ENCODE measurements at regions of chr1 and their contacts with region 1.

Region 1: GRCh38 chr1:26761217-26761616 is 26.5 kb upstream of the PIGV start:
- DNase-seq: peak in 1 of 35 experiments; percentile 17
- ATAC-seq: no peak
- H3K4me3 ChIP-seq: no peak overlapping the region
- H3K4me3 Mint-ChIP-seq: no peak overlapping the region
- H3K27ac ChIP-seq: no peak overlapping the region
- H3K27ac Mint-ChIP-seq: peak overlapping the region in 1 of 2 donors; percentile 54
- H3K4me1 ChIP-seq: peaks cover 0 to 9% of the 10 kb centered on the region in 2 experiments
- H3K4me1 Mint-ChIP-seq: peaks cover 23 to 31% (median 30%) of the 10 kb centered on the region in 3 donors
- H3K27me3 ChIP-seq: no peaks in the 10 kb centered on the region
- H3K27me3 Mint-ChIP-seq: no peaks in the 10 kb centered on the region

Region 2: DNA sequence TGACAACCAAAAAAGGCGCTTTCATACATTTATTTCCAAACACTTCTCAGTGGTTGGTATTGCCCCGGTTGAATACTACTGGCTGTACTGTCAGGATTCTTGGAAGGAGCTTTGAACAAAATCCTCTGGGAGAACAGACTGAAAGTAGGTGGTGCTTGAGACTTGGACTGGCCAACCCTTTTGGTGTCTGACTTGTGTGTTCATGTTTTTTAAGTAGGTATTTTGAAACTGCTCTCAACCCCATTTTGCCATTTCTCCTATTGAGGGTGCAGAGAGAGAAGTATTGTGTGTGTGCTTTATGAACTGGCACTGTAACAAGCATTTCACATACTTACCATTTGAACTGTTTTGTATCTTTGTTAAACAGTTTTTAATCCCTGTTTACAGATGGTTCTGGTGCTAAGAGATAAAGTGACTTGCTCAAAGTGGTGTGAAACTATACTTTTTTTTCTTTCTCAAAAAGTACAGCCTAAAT is 44.2 kb before region 1 on chr1:
- CTCF ChIA-PET with region 1: no interaction called
- POLR2A ChIA-PET with region 1: interaction called in 1 of 2 experiments, 11 read pairs
- DNase-seq: no peak
- ATAC-seq: no peak
- H3K4me3 ChIP-seq: no peak overlapping the region
- H3K4me3 Mint-ChIP-seq: peak overlapping the region in 1 of 3 donors; percentile 34
- H3K27ac ChIP-seq: no peak overlapping the region
- H3K27ac Mint-ChIP-seq: peak overlapping the region; percentile 64 to 89
- H3K4me1 ChIP-seq: peaks cover 39 to 57% of the 10 kb centered on the region in 2 experiments
- H3K4me1 Mint-ChIP-seq: peaks cover 90 to 94% (median 92%) of the 10 kb centered on the region in 3 donors
- H3K27me3 ChIP-seq: no peaks in the 10 kb centered on the region
- H3K27me3 Mint-ChIP-seq: no peaks in the 10 kb centered on the region

Region 3: DNA sequence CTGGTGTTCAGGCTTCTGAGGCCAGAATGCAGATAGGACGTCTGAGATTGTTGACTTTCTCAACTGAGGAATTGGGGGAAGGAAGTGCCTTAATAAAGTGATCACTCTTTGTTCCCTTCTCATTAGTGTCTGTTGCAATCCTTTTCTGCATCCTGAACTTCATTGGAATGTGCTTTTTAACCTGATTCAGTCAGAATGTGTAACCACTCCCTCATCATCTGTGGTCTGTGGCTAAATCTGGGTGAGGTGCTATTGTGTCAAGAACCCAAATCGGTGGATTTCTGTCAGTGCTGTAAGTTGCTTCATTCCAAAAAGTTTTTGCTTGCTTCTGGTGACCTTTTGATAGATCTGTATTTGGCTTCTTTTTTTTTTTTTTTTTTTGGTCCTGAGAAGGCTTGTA is 27.2 kb before region 1 on chr1:
- CTCF ChIA-PET with region 1: no interaction called
- POLR2A ChIA-PET with region 1: no interaction called
- DNase-seq: peak in 1 of 35 experiments; percentile 49
- ATAC-seq: peak; percentile 53 to 69 (median 62)
- H3K4me3 ChIP-seq: no peak overlapping the region
- H3K4me3 Mint-ChIP-seq: peak overlapping the region in 1 of 3 donors; percentile 42
- H3K27ac ChIP-seq: peak overlapping the region; percentile 3
- H3K27ac Mint-ChIP-seq: peak overlapping the region; percentile 86 to 91
- H3K4me1 ChIP-seq: peaks cover 25 to 41% of the 10 kb centered on the region in 2 experiments
- H3K4me1 Mint-ChIP-seq: peaks cover 57 to 67% (median 66%) of the 10 kb centered on the region in 3 donors
- H3K27me3 ChIP-seq: no peaks in the 10 kb centered on the region
- H3K27me3 Mint-ChIP-seq: no peaks in the 10 kb centered on the region